Activated CD4-positive, alpha-beta T cell treated with anti-CD3 and anti-CD28 coated beads, Interleukin-2, amount 10 ng/mL, durations not matched to agents 7 days and 5 days (primary cell): ENCODE measurements at regions of chr10 and their contacts with region 1.

Region 1: DNA sequence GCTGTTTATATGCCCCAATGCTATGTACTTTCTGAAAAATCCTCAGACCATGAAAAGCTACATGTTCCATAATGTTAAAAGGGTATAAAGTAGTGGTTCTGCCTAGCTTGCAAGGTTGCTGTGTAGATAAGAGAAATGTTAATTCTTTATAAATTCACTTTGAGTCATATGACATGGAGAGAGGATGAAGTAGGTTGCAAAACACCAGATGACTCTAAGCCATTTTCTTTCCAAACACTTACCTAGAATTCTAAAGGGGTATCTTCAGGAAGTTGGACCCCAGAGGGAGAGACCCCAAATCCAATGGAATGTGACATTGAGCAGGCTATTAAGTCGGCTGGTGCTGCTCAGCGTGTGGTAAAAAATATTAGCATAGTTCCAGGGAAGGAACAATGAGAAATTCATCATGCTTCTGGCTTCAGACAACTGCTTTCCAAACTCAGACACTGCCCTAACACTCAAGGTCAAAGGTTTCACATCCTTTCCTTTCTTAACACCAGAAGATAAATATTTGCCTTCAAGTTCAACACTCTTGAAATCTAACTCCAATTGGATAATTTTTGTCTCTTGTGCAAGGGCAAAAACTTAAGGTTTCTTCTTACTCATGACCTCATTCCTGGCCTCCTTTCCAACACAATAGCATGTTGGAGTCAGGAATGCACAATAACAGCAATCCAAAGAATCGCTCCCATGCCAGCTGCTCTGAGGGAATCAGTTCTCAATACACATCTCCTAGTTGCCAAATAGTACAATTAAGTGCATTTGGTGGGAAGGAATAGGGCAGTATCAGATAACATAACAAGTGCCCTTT is 100.7 kb upstream of the AFAP1L2 start:
- DNase-seq: no peak
- H3K4me3 Mint-ChIP-seq: no peak overlapping the region
- H3K27ac Mint-ChIP-seq: peak overlapping the region; percentile 21
- H3K4me1 Mint-ChIP-seq: peaks cover 87% of the 10 kb centered on the region
- H3K27me3 Mint-ChIP-seq: no peaks in the 10 kb centered on the region

Region 2: DNA sequence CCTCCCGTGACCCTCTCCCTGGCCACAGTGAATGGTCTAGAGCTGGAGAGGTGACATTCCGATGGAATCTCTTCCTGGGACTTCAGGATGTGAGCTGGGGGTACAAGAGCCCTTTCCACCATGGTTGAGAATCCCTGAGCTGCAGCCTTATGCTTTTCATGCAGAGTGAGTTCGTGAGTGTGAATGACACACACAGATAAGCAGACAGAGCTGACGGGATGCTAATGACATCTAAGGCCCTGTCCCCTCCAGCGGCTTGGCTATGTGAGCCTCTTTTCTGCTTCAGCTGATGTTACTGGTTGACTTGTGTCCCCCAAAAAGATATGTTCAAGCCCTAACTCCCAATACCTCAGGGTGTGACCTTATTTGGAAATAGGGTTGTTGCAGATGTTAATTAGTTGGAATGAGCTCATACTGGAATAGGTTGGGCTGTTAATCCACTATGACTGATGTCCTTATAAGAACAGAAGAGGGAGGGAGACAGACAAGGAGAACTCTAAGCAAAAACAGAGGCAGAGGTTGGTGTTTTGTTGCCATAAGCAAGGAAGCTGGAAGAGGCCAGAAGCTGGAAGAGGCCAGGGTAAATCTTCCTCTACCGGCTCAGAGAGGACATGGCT is 10.4 kb after region 1 on chr10:
- CTCF ChIA-PET with region 1: interaction called, 16 read pairs
- POLR2A ChIA-PET with region 1: interaction called, 4 read pairs
- DNase-seq: no peak
- H3K4me3 Mint-ChIP-seq: peak overlapping the region; percentile 22
- H3K27ac Mint-ChIP-seq: peak overlapping the region; percentile 42
- H3K4me1 Mint-ChIP-seq: peaks cover 92% of the 10 kb centered on the region
- H3K27me3 Mint-ChIP-seq: no peaks in the 10 kb centered on the region